ENCODE measurements at regions of chr2 and their contacts with region 1.

Region 1: GRCh38 chr2:29606104-29607037 is 315.0 kb downstream of the ALK start:
- DNase-seq: no peak
- ATAC-seq: no peak
- H3K4me3 ChIP-seq: no peak overlapping the region
- H3K27ac ChIP-seq: no peak overlapping the region
- H3K4me1 ChIP-seq: no peaks in the 10 kb centered on the region
- H3K27me3 ChIP-seq: no peaks in the 10 kb centered on the region
- CTCF ChIP-seq: no peak
- EP300 ChIP-seq: no peak
- POLR2A ChIP-seq: no peak
- RAD21 ChIP-seq: no peak

Region 2: DNA sequence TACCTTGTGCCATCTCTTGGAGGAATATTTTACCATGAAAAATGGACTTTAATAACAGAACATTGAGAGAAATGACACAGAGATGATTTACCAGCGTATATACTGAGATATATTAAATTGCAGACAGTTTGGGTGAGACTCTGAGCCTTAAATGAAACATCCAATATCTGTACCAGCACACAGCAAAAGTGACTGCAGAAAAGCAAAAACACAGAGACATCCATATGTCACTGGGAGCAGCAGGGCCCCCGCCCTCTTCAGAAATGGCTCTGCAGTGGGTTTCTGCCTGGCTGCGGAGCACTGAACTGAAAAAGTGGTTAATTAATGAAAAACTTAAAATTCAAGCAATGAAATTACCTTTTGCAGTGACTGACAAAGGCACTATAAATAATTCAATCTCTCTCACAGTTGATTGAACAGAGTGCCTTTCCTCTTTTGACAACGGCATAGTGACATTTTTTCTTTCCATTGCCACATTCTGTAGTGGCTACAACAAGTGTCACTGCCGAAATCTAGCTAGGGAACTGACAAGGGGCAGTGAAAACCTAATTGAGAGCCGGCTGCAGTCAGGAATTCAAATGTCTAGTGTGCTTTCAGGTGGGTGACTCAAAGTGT is 38.4 kb before region 1 on chr2:
- CTCF ChIA-PET with region 1: no interaction called
- POLR2A ChIA-PET with region 1: no interaction called
- RAD21 ChIA-PET with region 1: no interaction called
- SMC1A ChIA-PET with region 1: no interaction called
- in situ Hi-C with region 1: no loop called
- intact Hi-C with region 1: loop called (anchors 1 kb)
- DNase-seq: no peak
- ATAC-seq: no peak
- H3K4me3 ChIP-seq: no peak overlapping the region
- H3K27ac ChIP-seq: no peak overlapping the region
- H3K4me1 ChIP-seq: no peaks in the 10 kb centered on the region
- H3K27me3 ChIP-seq: no peaks in the 10 kb centered on the region; a peak in 1 of 4 replicates
- CTCF ChIP-seq: no peak
- EP300 ChIP-seq: no peak
- POLR2A ChIP-seq: no peak
- RAD21 ChIP-seq: no peak

Region 3: GRCh38 chr2:29657674-29658073 is 51.3 kb after region 1 on chr2:
- CTCF ChIA-PET with region 1: no interaction called
- POLR2A ChIA-PET with region 1: no interaction called
- RAD21 ChIA-PET with region 1: no interaction called
- SMC1A ChIA-PET with region 1: no interaction called
- in situ Hi-C with region 1: no loop called
- intact Hi-C with region 1: no loop called
- DNase-seq: no peak
- ATAC-seq: no peak
- H3K4me3 ChIP-seq: no peak overlapping the region
- H3K27ac ChIP-seq: no peak overlapping the region
- H3K4me1 ChIP-seq: no peaks in the 10 kb centered on the region
- H3K27me3 ChIP-seq: no peaks in the 10 kb centered on the region; a peak in 1 of 4 replicates
- CTCF ChIP-seq: no peak
- EP300 ChIP-seq: no peak
- POLR2A ChIP-seq: no peak
- RAD21 ChIP-seq: no peak

Measured in GM12878 (cell line).